HCT116 (cell line): ENCODE measurements at regions of chr18 and their contacts with region 1.

Region 1: DNA sequence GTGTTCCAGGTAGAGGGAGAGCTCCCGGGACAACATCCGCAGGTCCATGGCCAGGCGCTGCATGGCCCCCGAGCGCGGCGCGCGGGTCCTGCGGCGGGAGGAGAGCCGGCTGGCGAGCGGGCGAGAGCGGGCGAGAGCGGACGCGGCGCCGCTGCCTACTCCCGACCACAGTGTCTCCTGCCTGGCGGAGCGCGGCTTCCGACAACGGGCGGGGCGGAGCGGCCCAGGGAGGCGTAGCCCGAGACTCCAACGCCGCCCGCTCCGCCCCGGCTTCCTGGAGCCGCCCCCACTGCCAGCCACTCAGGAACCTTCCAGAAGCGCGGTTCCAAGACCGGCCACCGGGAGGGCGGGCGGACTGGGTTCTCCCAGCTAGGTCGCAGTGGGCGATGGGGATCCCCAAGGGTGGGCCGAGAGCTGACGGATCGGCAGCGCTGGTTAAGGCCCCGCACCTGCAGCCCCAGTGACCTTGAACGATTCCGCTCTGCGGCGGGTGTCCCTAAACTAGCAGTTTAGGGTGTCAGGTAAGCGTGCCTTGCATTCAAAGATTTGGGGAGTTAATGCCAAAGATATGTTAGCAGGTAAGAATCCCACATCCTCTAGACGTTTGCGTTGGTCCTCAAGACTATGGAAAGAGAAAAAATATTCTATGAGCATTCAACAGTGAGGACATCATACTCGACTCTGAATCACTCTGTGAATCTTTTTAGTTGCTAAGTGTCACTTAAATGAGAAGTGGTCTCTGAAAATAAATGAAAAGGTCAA is at the start of gene ABHD3:
- DNase-seq: peak; percentile 75
- ATAC-seq: peak; percentile 96
- H3K4me3 ChIP-seq: peak within 1 kb of the TSS; percentile 91 to 92
- H3K27ac ChIP-seq: peak within 1 kb of the TSS; percentile 75
- H3K4me1 ChIP-seq: peaks cover 11 to 16% of the 10 kb centered on the region in 2 experiments; a peak in 3 of 4 replicates
- H3K27me3 ChIP-seq: no peaks in the 10 kb centered on the region
- CTCF ChIP-seq: peak in 1 of 3 experiments; percentile 24; a peak in 2 of 6 replicates
- POLR2A ChIP-seq: peak; percentile 84
- RAD21 ChIP-seq: no peak
- total RNA-seq, gene ABHD3: 29.9 TPM

Region 2: DNA sequence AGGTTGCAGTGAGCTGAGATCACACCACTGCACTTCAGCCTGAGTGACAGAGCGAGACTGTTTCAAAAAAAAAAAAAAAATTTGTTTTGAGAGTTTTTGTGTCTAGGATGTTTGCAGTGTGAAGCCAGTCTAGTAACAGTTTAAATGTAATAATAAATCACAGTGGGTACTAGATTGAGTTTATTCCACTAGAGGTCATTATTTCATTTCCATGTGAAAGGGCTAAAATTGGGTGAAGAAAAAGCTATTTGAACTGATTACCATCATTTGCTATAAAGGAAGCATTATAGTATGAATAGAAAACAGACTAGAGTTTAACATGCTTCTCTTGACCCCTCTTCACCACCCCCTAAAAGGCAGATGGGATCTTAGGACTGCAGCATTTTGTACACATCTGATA is 72.4 kb before region 1 on chr18:
- CTCF ChIA-PET with region 1: no interaction called
- POLR2A ChIA-PET with region 1: no interaction called
- RAD21 ChIA-PET with region 1: no interaction called
- intact Hi-C with region 1: loop called (anchors 5 kb)
- DNase-seq: no peak
- ATAC-seq: no peak
- H3K4me3 ChIP-seq: no peak overlapping the region
- H3K27ac ChIP-seq: no peak overlapping the region
- H3K4me1 ChIP-seq: peaks cover 0 to 10% of the 10 kb centered on the region in 2 experiments; a peak in 1 of 4 replicates
- H3K27me3 ChIP-seq: no peaks in the 10 kb centered on the region
- CTCF ChIP-seq: peak in 2 of 3 experiments; percentile 7 to 18; a peak in 1 of 6 replicates
- POLR2A ChIP-seq: no peak
- RAD21 ChIP-seq: peak; percentile 47

Region 3: DNA sequence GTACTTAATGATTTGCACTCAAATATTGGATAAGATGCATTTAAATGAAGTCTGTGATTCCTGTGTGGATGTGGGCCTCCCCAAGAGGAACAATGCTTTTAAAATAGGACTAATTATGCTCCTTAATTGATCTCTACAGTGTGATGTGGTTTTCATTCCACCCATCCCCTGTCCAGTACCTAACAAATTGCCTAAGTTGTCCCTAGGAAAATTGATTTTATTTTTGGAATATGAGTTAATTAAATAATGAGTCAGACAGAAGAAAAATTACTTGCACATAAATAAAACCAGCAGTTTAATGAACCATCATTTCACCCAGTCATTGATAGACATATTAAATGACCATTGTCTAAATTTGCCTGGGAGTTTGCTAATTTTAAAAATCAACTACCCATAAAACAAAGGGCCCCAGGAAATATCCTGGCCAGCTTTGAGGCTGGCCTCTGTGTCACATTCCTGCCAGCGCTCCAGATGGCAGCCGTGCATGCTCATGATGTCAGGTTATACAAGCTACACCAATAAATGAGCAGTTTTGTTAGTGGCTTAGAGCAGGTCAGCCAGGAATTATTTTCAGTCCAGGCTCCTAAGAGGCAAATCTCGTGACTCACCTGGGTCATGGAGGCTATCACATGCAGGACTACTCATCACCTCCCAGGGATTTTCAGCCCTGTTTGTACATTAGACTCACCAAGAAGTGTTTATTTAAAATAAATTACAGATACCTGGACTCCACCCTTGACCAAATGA is 32.1 kb before region 1 on chr18:
- CTCF ChIA-PET with region 1: interaction called, 4 read pairs
- POLR2A ChIA-PET with region 1: interaction called, 5 read pairs
- RAD21 ChIA-PET with region 1: interaction called in 1 of 2 experiments, 3 read pairs
- intact Hi-C with region 1: loop called (anchors 2 kb)
- DNase-seq: peak; percentile 93
- ATAC-seq: peak; percentile 87
- H3K4me3 ChIP-seq: peak overlapping the region in 1 of 2 experiments; percentile 3; a peak in 1 of 4 replicates
- H3K27ac ChIP-seq: peak overlapping the region; percentile 73
- H3K4me1 ChIP-seq: peaks cover 72 to 90% of the 10 kb centered on the region in 2 experiments
- H3K27me3 ChIP-seq: no peaks in the 10 kb centered on the region
- CTCF ChIP-seq: no peak; a peak in 2 of 6 replicates
- POLR2A ChIP-seq: no peak
- RAD21 ChIP-seq: peak; percentile 48

Region 4: GRCh38 chr18:21740724-21741510 is 36.1 kb after region 1 on chr18 and contains the start of gene MIB1:
- CTCF ChIA-PET with region 1: no interaction called
- POLR2A ChIA-PET with region 1: interaction called, 9 read pairs
- RAD21 ChIA-PET with region 1: no interaction called
- intact Hi-C with region 1: loop called (anchors 5 kb)
- DNase-seq: peak; percentile 89
- ATAC-seq: peak; percentile 78
- H3K4me3 ChIP-seq: peak within 1 kb of the TSS; percentile 77 to 80
- H3K27ac ChIP-seq: peak within 1 kb of the TSS; percentile 92
- H3K4me1 ChIP-seq: peaks cover 11 to 21% of the 10 kb centered on the region in 2 experiments
- H3K27me3 ChIP-seq: no peaks in the 10 kb centered on the region
- CTCF ChIP-seq: no peak
- POLR2A ChIP-seq: peak; percentile 67
- RAD21 ChIP-seq: no peak
- total RNA-seq, gene MIB1: 56.1 TPM